ENCODE measurements at regions of chr18 and their contacts with region 1.

Region 1: GRCh38 chr18:43571078-43571689 is 293.9 kb upstream of the SYT4 start:
- DNase-seq: no peak
- H3K4me3 ChIP-seq: no peak overlapping the region
- H3K27ac ChIP-seq: no peak overlapping the region
- H3K4me1 ChIP-seq: no peaks in the 10 kb centered on the region
- H3K27me3 ChIP-seq: no peaks in the 10 kb centered on the region
- CTCF ChIP-seq: peak in 2 of 3 experiments; percentile 50 to 53

Region 2: GRCh38 chr18:43587538-43588153 is 16.5 kb after region 1 on chr18:
- intact Hi-C with region 1: loop called (anchors 2 kb)
- DNase-seq: no peak
- H3K4me3 ChIP-seq: no peak overlapping the region
- H3K27ac ChIP-seq: no peak overlapping the region
- H3K4me1 ChIP-seq: no peaks in the 10 kb centered on the region
- H3K27me3 ChIP-seq: no peaks in the 10 kb centered on the region
- CTCF ChIP-seq: peak in 2 of 3 experiments; percentile 56 to 64

Region 3: GRCh38 chr18:43601432-43601831 is 30.2 kb after region 1 on chr18:
- intact Hi-C with region 1: no loop called
- DNase-seq: no peak
- H3K4me3 ChIP-seq: no peak overlapping the region
- H3K27ac ChIP-seq: no peak overlapping the region
- H3K4me1 ChIP-seq: no peaks in the 10 kb centered on the region
- H3K27me3 ChIP-seq: no peaks in the 10 kb centered on the region
- CTCF ChIP-seq: no peak